GM12878 (cell line): ENCODE measurements at regions of chr1 and their contacts with region 1.

Region 1: DNA sequence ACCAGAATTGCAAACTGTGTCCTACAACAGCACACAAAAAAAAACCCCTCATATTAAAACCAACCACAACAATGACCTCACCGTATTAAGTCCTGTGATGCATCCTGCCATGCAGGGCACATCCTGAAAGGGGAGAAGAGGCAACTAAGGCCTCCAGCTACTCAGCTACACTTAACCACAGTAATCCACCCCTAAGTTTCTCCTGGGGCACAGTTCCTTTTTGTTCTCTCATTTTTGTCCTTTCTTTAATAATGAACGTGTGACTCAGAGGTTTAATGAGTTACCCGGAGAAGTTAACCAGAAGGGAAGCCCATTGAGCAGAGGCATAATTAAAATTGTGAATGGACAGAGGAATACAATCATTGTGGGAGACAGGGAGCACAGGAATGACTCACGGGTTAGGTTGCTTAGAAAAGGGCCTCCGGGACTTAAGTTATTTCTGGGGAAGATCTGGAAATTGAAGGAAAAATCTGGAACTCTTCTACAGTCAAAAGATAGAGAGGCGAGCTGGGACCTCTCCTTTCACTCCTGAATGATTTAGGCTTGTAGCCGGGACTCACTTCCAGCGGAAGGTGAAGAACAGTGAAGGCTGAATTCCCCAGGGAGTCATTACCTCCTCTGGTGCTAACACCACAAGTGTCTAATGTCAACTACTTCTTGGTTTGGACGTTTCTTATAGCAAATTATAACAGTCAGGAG is 36.9 kb upstream of the HIVEP3 start:
- DNase-seq: peak; percentile 87
- ATAC-seq: peak; percentile 92
- H3K4me3 ChIP-seq: no peak overlapping the region; the same call in 1 of the 2 replicates
- H3K27ac ChIP-seq: peak overlapping the region; percentile 67
- H3K4me1 ChIP-seq: peaks cover 26% of the 10 kb centered on the region
- H3K27me3 ChIP-seq: no peaks in the 10 kb centered on the region
- CTCF ChIP-seq: no peak
- EP300 ChIP-seq: peak; percentile 43 to 81; a peak in 3 of 4 replicates
- POLR2A ChIP-seq: no peak
- RAD21 ChIP-seq: no peak

Region 2: GRCh38 chr1:41891199-41891896 is 64.3 kb before region 1 on chr1:
- CTCF ChIA-PET with region 1: interaction called, 3 read pairs
- POLR2A ChIA-PET with region 1: no interaction called
- RAD21 ChIA-PET with region 1: interaction called, 8 read pairs
- SMC1A ChIA-PET with region 1: interaction called, 6 read pairs
- in situ Hi-C with region 1: no loop called
- intact Hi-C with region 1: loop called (anchors 2 kb)
- DNase-seq: peak; percentile 68
- ATAC-seq: peak; percentile 98
- H3K4me3 ChIP-seq: peak overlapping the region; percentile 66
- H3K27ac ChIP-seq: peak overlapping the region; percentile 75
- H3K4me1 ChIP-seq: peaks cover 15% of the 10 kb centered on the region
- H3K27me3 ChIP-seq: no peaks in the 10 kb centered on the region
- CTCF ChIP-seq: peak; percentile 39 to 42 (median 41); a peak in 5 of 6 replicates
- EP300 ChIP-seq: peak; percentile 4 to 26; a peak in 1 of 4 replicates
- POLR2A ChIP-seq: peak; percentile 73
- RAD21 ChIP-seq: peak; percentile 72

Region 3: DNA sequence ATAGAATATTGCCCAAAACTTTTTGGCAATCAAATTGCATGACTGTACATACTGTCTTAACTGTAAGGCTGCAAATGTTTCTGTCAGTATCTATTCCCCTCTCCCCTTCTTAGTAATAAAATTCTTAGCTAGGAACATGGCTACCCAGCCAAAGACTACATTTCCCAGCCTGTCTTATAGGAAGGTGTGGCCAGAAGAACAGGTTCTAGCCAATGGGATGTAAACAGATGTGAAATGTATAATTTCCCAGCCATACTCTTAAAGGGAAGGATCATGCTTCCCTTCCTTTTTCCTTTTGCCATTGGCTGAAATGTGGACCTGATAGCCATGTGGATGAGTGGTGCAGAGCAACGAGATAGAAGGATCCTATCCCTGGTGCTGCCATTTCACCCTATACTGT is 29.9 kb before region 1 on chr1:
- CTCF ChIA-PET with region 1: no interaction called
- POLR2A ChIA-PET with region 1: interaction called, 6 read pairs
- RAD21 ChIA-PET with region 1: interaction called, 6 read pairs
- SMC1A ChIA-PET with region 1: interaction called, 11 read pairs
- in situ Hi-C with region 1: no loop called
- intact Hi-C with region 1: loop called (anchors 2 kb)
- DNase-seq: no peak
- ATAC-seq: peak; percentile 48; the same call in 2 of the 3 replicates
- H3K4me3 ChIP-seq: no peak overlapping the region
- H3K27ac ChIP-seq: no peak overlapping the region
- H3K4me1 ChIP-seq: no peaks in the 10 kb centered on the region
- H3K27me3 ChIP-seq: no peaks in the 10 kb centered on the region
- CTCF ChIP-seq: no peak
- EP300 ChIP-seq: no peak
- POLR2A ChIP-seq: no peak
- RAD21 ChIP-seq: no peak

Region 4: DNA sequence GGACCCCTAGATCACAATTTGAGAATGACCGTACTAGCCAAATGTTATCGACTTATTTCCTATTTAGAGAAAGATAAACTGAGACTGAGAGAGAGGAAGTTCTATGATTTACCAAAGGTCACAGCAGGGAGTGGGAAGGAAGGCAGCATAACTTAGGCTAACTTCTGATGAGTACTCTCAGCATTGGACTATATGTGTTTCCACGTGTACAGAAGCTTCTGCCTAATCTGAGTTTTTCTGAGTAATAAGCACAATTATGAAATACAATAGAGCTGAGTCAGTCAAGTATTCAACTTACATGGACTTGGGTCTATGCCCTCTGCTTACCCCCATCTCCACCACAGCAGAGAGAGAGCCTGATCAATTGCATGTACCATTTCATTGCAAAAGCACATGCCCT is 51.2 kb after region 1 on chr1:
- CTCF ChIA-PET with region 1: interaction called, 5 read pairs
- POLR2A ChIA-PET with region 1: interaction called, 8 read pairs
- RAD21 ChIA-PET with region 1: interaction called, 9 read pairs
- SMC1A ChIA-PET with region 1: interaction called, 7 read pairs
- in situ Hi-C with region 1: no loop called
- intact Hi-C with region 1: loop called (anchors 5 kb)
- DNase-seq: no peak
- ATAC-seq: peak; percentile 47
- H3K4me3 ChIP-seq: no peak overlapping the region
- H3K27ac ChIP-seq: peak overlapping the region; percentile 79
- H3K4me1 ChIP-seq: peaks cover 34% of the 10 kb centered on the region
- H3K27me3 ChIP-seq: no peaks in the 10 kb centered on the region
- CTCF ChIP-seq: no peak
- EP300 ChIP-seq: no peak
- POLR2A ChIP-seq: no peak
- RAD21 ChIP-seq: 0 out of 2 replicates have a peak, but pooled peaks have one; percentile 2